ENCODE measurements at regions of chr1 and their contacts with region 1.

Region 1: GRCh38 chr1:109201123-109201703 is 12.5 kb upstream of the SARS1 start:
- DNase-seq: peak; percentile 96
- ATAC-seq: peak; percentile 57
- H3K4me3 ChIP-seq: no peak overlapping the region
- H3K27ac ChIP-seq: peak overlapping the region; percentile 28
- H3K4me1 ChIP-seq: peaks cover 14% of the 10 kb centered on the region
- H3K27me3 ChIP-seq: no peaks in the 10 kb centered on the region
- CTCF ChIP-seq: peak; percentile 93
- POLR2A ChIP-seq: peak; percentile 70
- RAD21 ChIP-seq: peak; percentile 91

Region 2: DNA sequence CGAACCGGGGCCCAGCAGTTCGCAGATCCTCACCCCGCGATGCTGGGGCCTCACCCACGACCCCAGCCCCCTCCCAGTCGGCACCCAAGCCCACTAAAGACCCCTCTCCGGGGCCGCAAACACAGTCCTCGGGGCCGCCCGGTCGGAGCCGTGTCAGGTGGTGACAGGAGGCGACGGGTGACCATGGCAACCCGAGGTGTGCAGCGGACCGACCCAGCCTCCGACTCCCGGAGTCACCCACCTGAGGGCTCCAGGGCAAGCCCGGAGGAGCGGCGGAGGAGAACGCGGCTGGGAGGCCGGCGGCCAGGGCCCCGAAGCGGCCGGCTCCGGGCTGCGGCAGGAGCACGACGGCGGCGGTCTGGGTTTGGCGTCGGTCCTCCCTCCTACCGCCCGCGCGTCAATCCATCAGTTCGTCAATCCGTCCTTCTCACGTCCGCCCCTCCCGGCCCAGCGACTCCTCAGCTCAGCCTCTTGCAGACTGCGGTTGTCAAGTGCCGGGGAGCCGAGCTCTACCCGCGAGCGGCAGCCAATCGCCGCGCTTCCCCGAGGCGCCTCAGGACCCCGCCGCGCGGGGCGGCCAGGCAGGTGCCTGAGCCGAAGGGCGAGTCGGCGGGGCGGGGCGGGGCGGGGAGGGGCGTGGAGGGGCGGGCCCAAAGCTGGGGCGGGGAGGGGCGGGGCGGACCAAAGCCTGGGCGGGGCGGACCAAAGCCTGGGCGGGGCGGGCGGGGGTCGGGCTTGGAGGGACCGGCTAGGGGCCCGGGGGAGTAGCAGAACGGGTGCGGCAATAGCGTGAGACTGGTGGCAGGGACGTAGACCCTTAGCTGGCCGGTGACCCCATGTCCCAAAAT is 159.4 kb before region 1 on chr1 and contains the start of gene WDR47:
- CTCF ChIA-PET with region 1: interaction called, 4 read pairs
- POLR2A ChIA-PET with region 1: interaction called, 15 read pairs
- dilution Hi-C with region 1: no loop called
- in situ Hi-C with region 1: no loop called
- intact Hi-C with region 1: no loop called
- DNase-seq: peak; percentile 93
- ATAC-seq: peak; percentile 99
- H3K4me3 ChIP-seq: peak within 1 kb of the TSS; percentile 99
- H3K27ac ChIP-seq: peak within 1 kb of the TSS; percentile 74
- H3K4me1 ChIP-seq: no peaks in the 10 kb centered on the region; the same call in 1 of the 2 replicates
- H3K27me3 ChIP-seq: no peaks in the 10 kb centered on the region
- CTCF ChIP-seq: no peak
- POLR2A ChIP-seq: peak; percentile 99
- RAD21 ChIP-seq: no peak
- total RNA-seq, gene WDR47: 17.4 and 23.3 TPM in 2 replicates

Region 3: GRCh38 chr1:109263597-109264398 is 62.6 kb after region 1 on chr1:
- CTCF ChIA-PET with region 1: no interaction called
- POLR2A ChIA-PET with region 1: no interaction called
- dilution Hi-C with region 1: no loop called
- in situ Hi-C with region 1: no loop called
- intact Hi-C with region 1: loop called (anchors 1 kb)
- DNase-seq: peak; percentile 79
- ATAC-seq: peak; percentile 97
- H3K4me3 ChIP-seq: no peak overlapping the region
- H3K27ac ChIP-seq: no peak overlapping the region
- H3K4me1 ChIP-seq: no peaks in the 10 kb centered on the region
- H3K27me3 ChIP-seq: no peaks in the 10 kb centered on the region
- CTCF ChIP-seq: peak; percentile 99
- POLR2A ChIP-seq: no peak
- RAD21 ChIP-seq: peak; percentile 89